Heart left ventricle (tissue), 16 donors: ENCODE measurements at regions of chr16 and their contacts with region 1.

Region 1: DNA sequence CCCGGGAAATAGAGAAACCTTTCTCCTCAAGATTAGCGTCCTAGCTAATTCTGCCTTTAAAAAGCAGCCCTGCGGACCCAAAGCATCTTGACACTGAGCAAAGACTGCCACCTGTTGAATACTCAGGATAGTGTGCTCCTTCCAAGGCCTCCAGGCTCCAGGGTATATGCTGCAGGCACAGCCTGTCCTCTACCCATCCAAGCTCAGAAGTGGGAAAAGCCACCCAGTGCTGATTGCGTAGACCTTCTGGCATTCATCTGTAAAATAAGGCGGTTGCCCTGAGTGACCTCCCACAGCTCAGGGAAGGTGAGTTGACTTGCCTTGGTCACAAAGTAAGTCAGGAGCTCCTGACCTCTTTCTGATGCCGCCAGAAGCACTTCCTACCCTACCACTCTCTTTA is 456.1 kb upstream of the DYNLRB2 start:
- DNase-seq: peak in 4 of 5 donors; percentile 32 to 43 (median 38)
- ATAC-seq: peak; percentile 67 to 96 (median 92)
- H3K4me3 ChIP-seq: no peak overlapping the region
- H3K27ac ChIP-seq: no peak overlapping the region
- H3K4me1 ChIP-seq: peaks cover 0 to 5% (median 0%) of the 10 kb centered on the region in 12 donors
- H3K27me3 ChIP-seq: no peaks in the 10 kb centered on the region
- CTCF ChIP-seq: peak; percentile 43 to 76 (median 66)
- POLR2A ChIP-seq: no peak

Region 2: DNA sequence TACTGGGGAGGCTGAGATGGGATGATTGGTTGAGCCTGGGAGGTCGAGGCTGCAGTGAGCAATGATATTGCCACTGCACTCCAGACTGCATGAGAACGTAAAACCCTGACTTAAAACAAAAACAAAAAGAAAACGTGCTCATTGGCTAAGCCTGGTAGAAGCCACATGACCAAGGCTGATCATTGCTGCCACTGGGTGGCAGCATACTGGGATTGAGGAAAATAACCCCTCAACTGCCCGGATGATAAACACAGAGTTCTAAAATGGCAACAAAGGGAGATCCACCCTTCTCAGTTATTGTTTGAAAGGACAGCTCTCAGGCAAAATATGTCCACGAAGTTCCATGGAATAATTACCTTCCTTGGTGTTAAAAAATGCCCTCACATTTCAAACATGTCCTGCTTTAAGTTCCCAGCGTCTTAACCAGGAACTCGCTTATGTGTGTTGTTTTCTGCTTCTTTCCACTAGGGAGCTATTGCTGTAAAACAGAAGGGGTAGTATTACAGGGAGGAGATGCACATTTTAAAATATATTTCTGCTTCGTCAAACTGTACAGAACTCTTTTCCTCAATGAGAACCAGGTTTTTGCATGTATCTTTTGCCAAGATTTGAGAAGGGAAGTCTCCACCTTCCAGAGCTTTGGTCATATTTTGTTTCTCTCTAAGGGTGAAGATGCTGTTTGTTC is 1159.5 kb before region 1 on chr16:
- intact Hi-C with region 1: loop called in 1 of 10 experiments (anchors 10 kb)
- DNase-seq: peak in 2 of 5 donors; percentile 41 to 53
- ATAC-seq: peak in 3 of 4 donors; percentile 32 to 54 (median 44)
- H3K4me3 ChIP-seq: no peak overlapping the region
- H3K27ac ChIP-seq: no peak overlapping the region
- H3K4me1 ChIP-seq: peaks cover 0 to 3% (median 0%) of the 10 kb centered on the region in 12 donors
- H3K27me3 ChIP-seq: no peaks in the 10 kb centered on the region
- CTCF ChIP-seq: peak; percentile 24 to 64 (median 47)
- POLR2A ChIP-seq: no peak

Region 3: DNA sequence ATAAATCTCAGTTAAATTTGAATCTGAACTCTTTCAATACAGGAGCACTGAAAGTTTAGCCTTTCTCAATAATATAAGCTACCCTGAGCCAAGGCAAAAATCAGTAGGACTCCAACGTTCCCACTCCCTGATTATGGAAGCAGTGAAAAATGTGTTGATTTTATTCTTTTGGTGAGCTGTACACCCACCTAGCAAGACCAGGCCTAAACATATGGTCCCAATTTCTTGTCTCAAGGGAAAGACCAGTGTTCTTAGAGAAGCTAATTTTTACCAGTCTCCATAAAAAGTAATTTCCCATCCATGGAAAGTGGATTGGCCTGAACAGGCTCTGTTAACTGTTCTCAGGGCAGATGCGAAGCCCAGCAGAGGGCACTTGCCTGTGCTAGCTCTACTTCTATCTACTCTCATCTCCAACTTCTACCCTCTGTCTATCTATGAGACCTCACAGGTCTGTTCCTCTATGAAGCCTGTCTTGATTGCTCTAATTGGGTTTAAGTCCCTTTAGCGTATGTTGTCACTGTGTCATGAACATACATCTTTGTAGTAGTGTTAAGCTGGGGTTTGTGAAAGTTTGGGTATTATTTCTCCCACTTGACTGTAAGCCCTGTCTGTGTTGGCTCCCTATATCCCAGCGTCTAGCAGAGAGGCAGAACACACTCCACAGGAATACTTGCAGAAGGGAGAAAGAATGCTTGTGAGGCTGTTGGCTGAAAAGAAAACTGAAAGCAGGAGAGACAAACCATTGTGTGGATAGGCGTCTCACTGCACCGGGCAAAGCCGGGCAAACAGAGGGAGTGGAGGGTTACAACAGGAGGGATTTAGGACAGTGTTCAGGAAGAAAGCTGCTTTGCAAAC is 317.0 kb before region 1 on chr16:
- intact Hi-C with region 1: loop called in 2 of 10 experiments (anchors 5 to 10 kb)
- DNase-seq: peak in 2 of 5 donors; percentile 21 to 50
- ATAC-seq: peak; percentile 6 to 51 (median 17)
- H3K4me3 ChIP-seq: peak overlapping the region in 9 of 12 donors; percentile 21 to 51 (median 38)
- H3K27ac ChIP-seq: peak overlapping the region; percentile 53 to 85 (median 69)
- H3K4me1 ChIP-seq: peaks cover 0 to 35% (median 11%) of the 10 kb centered on the region in 12 donors
- H3K27me3 ChIP-seq: no peaks in the 10 kb centered on the region
- CTCF ChIP-seq: peak in 8 of 12 donors; percentile 7 to 44 (median 18)
- POLR2A ChIP-seq: no peak

Region 4: GRCh38 chr16:79988721-79989215 is 95.9 kb before region 1 on chr16:
- intact Hi-C with region 1: no loop called
- DNase-seq: no peak
- ATAC-seq: no peak
- H3K4me3 ChIP-seq: no peak overlapping the region
- H3K27ac ChIP-seq: no peak overlapping the region
- H3K4me1 ChIP-seq: no peaks in the 10 kb centered on the region
- H3K27me3 ChIP-seq: no peaks in the 10 kb centered on the region
- CTCF ChIP-seq: no peak
- POLR2A ChIP-seq: no peak